Gastrocnemius medialis (tissue), 4 donors: ENCODE measurements at regions of chr12 and their contacts with region 1.

Region 1: GRCh38 chr12:71415336-71416231 is 24.0 kb upstream of the LGR5 start:
- DNase-seq: peak in 1 of 2 donors; percentile 23
- ATAC-seq: peak; percentile 97 to 98
- H3K4me3 ChIP-seq: no peak overlapping the region
- H3K27ac ChIP-seq: no peak overlapping the region
- H3K4me1 ChIP-seq: peaks cover 4 to 5% of the 10 kb centered on the region in 2 donors
- H3K27me3 ChIP-seq: no peaks in the 10 kb centered on the region
- CTCF ChIP-seq: peak; percentile 61 to 76 (median 63)
- POLR2A ChIP-seq: no peak

Region 2: GRCh38 chr12:69442894-69443293 is 1972.7 kb before region 1 on chr12:
- in situ Hi-C with region 1: no loop called
- intact Hi-C with region 1: no loop called
- DNase-seq: no peak
- ATAC-seq: no peak
- H3K4me3 ChIP-seq: no peak overlapping the region
- H3K27ac ChIP-seq: no peak overlapping the region
- H3K4me1 ChIP-seq: no peaks in the 10 kb centered on the region
- H3K27me3 ChIP-seq: no peaks in the 10 kb centered on the region
- CTCF ChIP-seq: no peak
- POLR2A ChIP-seq: no peak

Region 3: GRCh38 chr12:71439362-71440314 is 24.1 kb after region 1 on chr12 and contains the start of gene LGR5:
- in situ Hi-C with region 1: no loop called
- intact Hi-C with region 1: loop called (anchors 1 kb)
- DNase-seq: peak in 1 of 2 donors; percentile 30
- ATAC-seq: peak; percentile 27 to 62
- H3K4me3 ChIP-seq: peak within 1 kb of the TSS; percentile 52 to 67 (median 66)
- H3K27ac ChIP-seq: peak within 1 kb of the TSS; percentile 70 to 82 (median 71)
- H3K4me1 ChIP-seq: peaks cover 13 to 29% of the 10 kb centered on the region in 2 donors
- H3K27me3 ChIP-seq: peaks cover 0 to 6% (median 0%) of the 10 kb centered on the region in 3 donors
- CTCF ChIP-seq: no peak
- POLR2A ChIP-seq: peak in 1 of 2 donors; percentile 42
- total RNA-seq, gene LGR5: 8.7 to 40.1 (median 24.3) TPM

Region 4: GRCh38 chr12:71551529-71551928 is 135.9 kb after region 1 on chr12:
- in situ Hi-C with region 1: loop called in 1 of 4 experiments (anchors 5 kb)
- intact Hi-C with region 1: loop called (anchors 5 kb)
- DNase-seq: no peak
- ATAC-seq: no peak
- H3K4me3 ChIP-seq: no peak overlapping the region
- H3K27ac ChIP-seq: no peak overlapping the region
- H3K4me1 ChIP-seq: no peaks in the 10 kb centered on the region
- H3K27me3 ChIP-seq: no peaks in the 10 kb centered on the region
- CTCF ChIP-seq: peak in 2 of 5 experiments; percentile 12 to 35
- POLR2A ChIP-seq: no peak

Region 5: GRCh38 chr12:71636704-71637115 is 221.1 kb after region 1 on chr12:
- in situ Hi-C with region 1: loop called in 3 of 4 experiments (anchors 10 to 25 kb)
- intact Hi-C with region 1: loop called (anchors 5 kb)
- DNase-seq: no peak
- ATAC-seq: no peak
- H3K4me3 ChIP-seq: no peak overlapping the region
- H3K27ac ChIP-seq: no peak overlapping the region
- H3K4me1 ChIP-seq: no peaks in the 10 kb centered on the region
- H3K27me3 ChIP-seq: no peaks in the 10 kb centered on the region
- CTCF ChIP-seq: peak in 4 of 5 experiments; percentile 22 to 69 (median 58)
- POLR2A ChIP-seq: no peak

Region 6: GRCh38 chr12:71642264-71642663 is 226.7 kb after region 1 on chr12:
- in situ Hi-C with region 1: loop called in 3 of 4 experiments (anchors 10 to 25 kb)
- intact Hi-C with region 1: loop called (anchors 5 kb)
- DNase-seq: no peak
- ATAC-seq: no peak
- H3K4me3 ChIP-seq: no peak overlapping the region
- H3K27ac ChIP-seq: no peak overlapping the region
- H3K4me1 ChIP-seq: no peaks in the 10 kb centered on the region
- H3K27me3 ChIP-seq: no peaks in the 10 kb centered on the region
- CTCF ChIP-seq: no peak
- POLR2A ChIP-seq: no peak

Region 7: GRCh38 chr12:71746983-71747611 is 331.5 kb after region 1 on chr12:
- in situ Hi-C with region 1: loop called (anchors 10 to 25 kb)
- intact Hi-C with region 1: loop called (anchors 1 kb)
- DNase-seq: peak in 1 of 2 donors; percentile 16
- ATAC-seq: peak; percentile 97 to 98
- H3K4me3 ChIP-seq: no peak overlapping the region
- H3K27ac ChIP-seq: no peak overlapping the region
- H3K4me1 ChIP-seq: peaks cover 0 to 3% of the 10 kb centered on the region in 2 donors
- H3K27me3 ChIP-seq: no peaks in the 10 kb centered on the region
- CTCF ChIP-seq: peak; percentile 43 to 81 (median 70)
- POLR2A ChIP-seq: no peak